ENCODE measurements at regions of chr2 and their contacts with region 1.

Region 1: GRCh38 chr2:165874445-165875039 is 79.0 kb downstream of the TTC21B start:
- DNase-seq: peak; percentile 24
- H3K4me3 Mint-ChIP-seq: no peak overlapping the region
- H3K27ac Mint-ChIP-seq: no peak overlapping the region
- H3K4me1 Mint-ChIP-seq: no peaks in the 10 kb centered on the region
- H3K27me3 Mint-ChIP-seq: no peaks in the 10 kb centered on the region
- CTCF ChIP-seq: peak; percentile 51

Region 2: DNA sequence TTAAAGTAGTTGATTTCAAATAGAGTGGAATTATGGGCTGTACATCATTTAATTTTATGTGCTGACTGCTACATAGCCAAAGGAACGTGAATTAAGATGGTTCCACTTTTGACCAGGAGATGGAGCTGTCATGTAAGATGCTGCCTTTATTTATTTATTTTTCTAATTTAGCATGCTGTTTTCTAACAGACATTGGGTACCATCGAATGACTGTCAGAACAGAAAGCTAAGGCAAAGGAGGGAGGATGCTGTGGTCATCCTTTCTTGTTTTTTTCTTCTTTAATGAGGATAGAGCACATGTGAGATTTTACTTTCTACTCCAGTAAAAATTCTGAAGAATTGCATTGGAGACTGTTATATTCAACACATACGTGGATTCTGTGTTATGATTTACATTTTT is 635.3 kb before region 1 on chr2 and contains the start of gene SCN2A:
- CTCF ChIA-PET with region 1: interaction called, 7 read pairs
- intact Hi-C with region 1: loop called (anchors 5 kb)
- DNase-seq: peak; percentile 35
- H3K4me3 Mint-ChIP-seq: no peak within 1 kb of the TSS
- H3K27ac Mint-ChIP-seq: no peak within 1 kb of the TSS
- H3K4me1 Mint-ChIP-seq: no peaks in the 10 kb centered on the region
- H3K27me3 Mint-ChIP-seq: no peaks in the 10 kb centered on the region
- CTCF ChIP-seq: peak; percentile 73
- total RNA-seq, gene SCN2A: 0.07 and 0.19 TPM in 2 replicates

Region 3: GRCh38 chr2:165573534-165574461 is 300.7 kb before region 1 on chr2:
- CTCF ChIA-PET with region 1: no interaction called
- intact Hi-C with region 1: loop called (anchors 10 kb)
- DNase-seq: peak; percentile 44
- H3K4me3 Mint-ChIP-seq: peak overlapping the region; percentile 90
- H3K27ac Mint-ChIP-seq: peak overlapping the region; percentile 66
- H3K4me1 Mint-ChIP-seq: no peaks in the 10 kb centered on the region
- H3K27me3 Mint-ChIP-seq: no peaks in the 10 kb centered on the region
- CTCF ChIP-seq: no peak

Region 4: DNA sequence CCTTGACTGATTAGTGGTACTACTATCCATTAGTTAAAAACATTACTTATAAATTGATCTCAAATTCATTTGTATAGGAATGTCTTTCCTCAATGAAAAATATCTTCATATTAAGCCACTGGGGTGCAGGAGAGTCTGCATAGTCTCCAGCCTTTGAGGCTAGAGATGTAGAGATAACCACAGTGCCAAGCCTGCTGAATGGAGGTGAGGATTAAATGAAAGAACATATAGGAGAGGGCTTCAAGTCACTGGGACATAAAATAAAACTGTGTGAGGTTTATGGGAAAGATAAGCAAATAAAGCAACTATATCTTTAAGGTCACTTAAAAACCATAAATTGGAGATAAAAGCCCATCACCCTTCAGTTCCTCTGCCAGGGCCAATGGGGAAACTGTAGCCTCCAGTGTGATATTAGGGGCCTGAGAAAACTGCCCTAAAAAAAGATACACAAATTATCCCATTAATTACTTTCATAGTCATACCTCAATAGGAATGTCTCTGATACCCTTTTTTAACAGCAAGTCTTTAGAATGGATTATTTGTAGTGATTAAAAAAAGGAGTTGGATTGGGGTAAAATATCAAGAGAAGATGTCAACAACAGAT is 108.1 kb before region 1 on chr2:
- CTCF ChIA-PET with region 1: interaction called, 6 read pairs
- intact Hi-C with region 1: loop called (anchors 1 kb)
- DNase-seq: peak; percentile 10
- H3K4me3 Mint-ChIP-seq: peak overlapping the region; percentile 29
- H3K27ac Mint-ChIP-seq: peak overlapping the region; percentile 43
- H3K4me1 Mint-ChIP-seq: peaks cover 22% of the 10 kb centered on the region
- H3K27me3 Mint-ChIP-seq: no peaks in the 10 kb centered on the region
- CTCF ChIP-seq: no peak

Region 5: DNA sequence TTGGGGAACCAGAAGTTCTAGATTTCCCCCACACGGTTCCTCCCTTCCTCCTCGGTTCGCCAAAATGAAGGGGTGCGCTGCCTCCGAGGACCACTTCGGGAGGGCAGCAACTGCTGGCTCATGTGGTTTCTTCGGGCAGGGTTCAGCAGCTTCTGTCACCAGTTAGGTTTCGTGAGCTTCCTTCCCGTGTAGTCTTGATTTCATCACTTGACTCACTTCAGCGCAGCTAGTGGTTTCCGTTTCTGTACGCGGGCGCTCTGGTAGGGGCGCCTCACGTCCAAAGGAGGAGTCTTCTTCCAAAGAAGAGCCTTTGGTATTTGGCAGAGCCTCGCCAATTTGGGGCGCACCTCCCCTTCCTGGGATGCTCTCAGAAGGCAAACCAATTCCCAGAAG is 80.0 kb before region 1 on chr2:
- CTCF ChIA-PET with region 1: interaction called, 29 read pairs
- intact Hi-C with region 1: loop called (anchors 5 kb)
- DNase-seq: peak; percentile 44
- H3K4me3 Mint-ChIP-seq: peak overlapping the region; percentile 83
- H3K27ac Mint-ChIP-seq: peak overlapping the region; percentile 92
- H3K4me1 Mint-ChIP-seq: peaks cover 26% of the 10 kb centered on the region
- H3K27me3 Mint-ChIP-seq: no peaks in the 10 kb centered on the region
- CTCF ChIP-seq: no peak